Activated T-helper 2 cell treated with anti-CD3 and anti-CD28 coated beads, Interferon-gamma antibody, Interleukin-2, Interleukin-4, amounts not matched to agents 10 μg/mL and 5 μg/mL and 100 μg/mL, durations not matched to agents 14 hours and 24 hours and 36 hours (primary cell): ENCODE measurements at regions of chrX and their contacts with region 1.

Region 1: GRCh38 chrX:55907968-55908607 is 190.5 kb downstream of the RRAGB start:
- DNase-seq: peak; percentile 34
- H3K4me3 Mint-ChIP-seq: peak overlapping the region; percentile 89
- H3K27ac Mint-ChIP-seq: peak overlapping the region; percentile 77
- H3K4me1 Mint-ChIP-seq: peaks cover 13% of the 10 kb centered on the region
- H3K27me3 Mint-ChIP-seq: no peaks in the 10 kb centered on the region

Region 2: DNA sequence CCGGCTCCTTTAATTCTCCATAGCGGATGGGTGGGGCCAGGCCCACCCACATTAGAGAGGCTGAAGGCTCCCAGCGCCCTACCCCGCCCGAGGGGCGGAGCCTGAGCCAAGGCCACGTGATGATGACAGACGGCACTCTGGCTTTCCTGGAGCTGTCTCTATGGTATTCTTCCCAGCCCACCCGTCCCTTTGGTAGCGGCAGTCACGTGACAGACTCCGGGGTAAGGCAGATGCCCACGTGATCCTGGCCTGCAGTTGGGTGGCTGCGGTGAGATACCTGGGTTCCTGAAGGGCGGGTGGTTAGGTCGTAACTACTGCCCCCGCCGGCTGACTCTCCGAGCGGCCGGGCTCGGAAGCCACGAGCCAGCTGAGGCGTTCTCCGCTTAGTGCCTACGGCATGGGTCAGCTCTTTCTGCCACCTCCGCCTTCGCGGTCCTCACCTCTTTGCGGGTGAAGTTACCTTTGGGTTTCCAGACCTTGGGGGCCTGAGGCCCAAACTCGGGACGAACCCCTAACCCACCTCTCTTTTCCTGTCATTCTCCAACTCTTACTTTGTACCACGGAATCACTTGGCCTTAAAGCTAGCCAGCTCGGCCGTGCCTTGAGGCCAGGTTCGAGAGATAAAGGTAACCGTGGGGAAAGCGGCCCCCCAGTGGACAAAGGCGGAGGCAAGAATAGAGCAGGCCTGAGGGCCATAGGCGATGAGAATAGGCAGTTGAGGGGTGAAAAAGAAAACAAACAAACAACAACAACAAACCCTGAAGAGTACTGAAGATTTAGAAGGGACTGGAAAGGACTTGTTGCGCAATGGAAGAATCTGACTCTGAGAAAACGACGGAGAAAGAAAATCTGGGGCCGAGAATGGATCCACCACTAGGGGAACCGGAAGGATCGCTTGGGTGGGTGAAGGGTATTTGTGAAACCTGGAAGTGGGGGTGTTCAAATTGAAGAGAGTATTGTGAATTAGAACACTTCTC is 190.3 kb before region 1 on chrX and contains the start of gene RRAGB:
- intact Hi-C with region 1: loop called (anchors 2 kb)
- DNase-seq: peak; percentile 88
- H3K4me3 Mint-ChIP-seq: peak within 1 kb of the TSS; percentile 87
- H3K27ac Mint-ChIP-seq: peak within 1 kb of the TSS; percentile 83
- H3K4me1 Mint-ChIP-seq: peaks cover 17% of the 10 kb centered on the region
- H3K27me3 Mint-ChIP-seq: no peaks in the 10 kb centered on the region
- total RNA-seq, gene RRAGB: 5.2 and 6.4 TPM in 2 replicates

Region 3: DNA sequence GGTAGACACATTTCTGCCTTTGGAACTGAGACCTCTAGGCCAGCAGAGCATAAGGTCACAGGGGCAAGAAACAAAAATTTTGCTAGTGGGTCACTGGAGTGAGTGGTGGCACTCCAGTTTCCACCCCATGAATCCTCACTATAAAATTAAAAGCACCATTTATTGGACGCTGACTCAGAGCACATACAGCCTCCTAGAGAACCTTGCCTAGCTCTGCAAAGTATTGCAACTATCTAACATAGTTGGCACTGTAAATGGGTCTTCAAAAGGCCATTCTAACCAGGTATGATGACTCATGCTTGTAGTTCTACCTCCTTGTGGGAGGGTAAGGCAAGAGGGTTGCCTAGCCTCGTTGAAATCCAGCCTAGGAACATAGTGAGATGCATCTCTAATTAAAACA is 165.4 kb before region 1 on chrX:
- intact Hi-C with region 1: no loop called
- DNase-seq: no peak
- H3K4me3 Mint-ChIP-seq: no peak overlapping the region
- H3K27ac Mint-ChIP-seq: no peak overlapping the region
- H3K4me1 Mint-ChIP-seq: no peaks in the 10 kb centered on the region
- H3K27me3 Mint-ChIP-seq: no peaks in the 10 kb centered on the region

Region 4: DNA sequence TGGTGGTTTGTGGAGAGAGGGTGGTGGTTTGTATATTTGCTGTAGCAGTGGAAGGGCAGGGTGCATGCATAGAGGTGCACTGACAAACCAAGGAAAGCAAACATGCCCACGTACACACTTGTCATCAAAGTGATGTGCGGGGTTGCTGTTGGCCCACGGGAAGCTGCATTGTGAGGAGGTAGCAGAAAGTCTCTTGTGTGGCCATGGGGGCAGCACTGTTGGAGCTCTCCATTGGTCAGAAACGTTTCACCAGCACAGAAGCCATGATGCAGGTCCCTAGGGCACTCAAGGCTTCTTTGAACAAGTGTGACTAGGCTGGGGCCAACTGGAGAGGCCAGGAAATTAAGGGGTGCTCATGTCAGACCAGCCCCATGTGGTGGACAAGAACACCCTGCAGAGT is 149.2 kb after region 1 on chrX:
- intact Hi-C with region 1: no loop called
- DNase-seq: no peak
- H3K4me3 Mint-ChIP-seq: no peak overlapping the region
- H3K27ac Mint-ChIP-seq: no peak overlapping the region
- H3K4me1 Mint-ChIP-seq: no peaks in the 10 kb centered on the region
- H3K27me3 Mint-ChIP-seq: no peaks in the 10 kb centered on the region

Region 5: DNA sequence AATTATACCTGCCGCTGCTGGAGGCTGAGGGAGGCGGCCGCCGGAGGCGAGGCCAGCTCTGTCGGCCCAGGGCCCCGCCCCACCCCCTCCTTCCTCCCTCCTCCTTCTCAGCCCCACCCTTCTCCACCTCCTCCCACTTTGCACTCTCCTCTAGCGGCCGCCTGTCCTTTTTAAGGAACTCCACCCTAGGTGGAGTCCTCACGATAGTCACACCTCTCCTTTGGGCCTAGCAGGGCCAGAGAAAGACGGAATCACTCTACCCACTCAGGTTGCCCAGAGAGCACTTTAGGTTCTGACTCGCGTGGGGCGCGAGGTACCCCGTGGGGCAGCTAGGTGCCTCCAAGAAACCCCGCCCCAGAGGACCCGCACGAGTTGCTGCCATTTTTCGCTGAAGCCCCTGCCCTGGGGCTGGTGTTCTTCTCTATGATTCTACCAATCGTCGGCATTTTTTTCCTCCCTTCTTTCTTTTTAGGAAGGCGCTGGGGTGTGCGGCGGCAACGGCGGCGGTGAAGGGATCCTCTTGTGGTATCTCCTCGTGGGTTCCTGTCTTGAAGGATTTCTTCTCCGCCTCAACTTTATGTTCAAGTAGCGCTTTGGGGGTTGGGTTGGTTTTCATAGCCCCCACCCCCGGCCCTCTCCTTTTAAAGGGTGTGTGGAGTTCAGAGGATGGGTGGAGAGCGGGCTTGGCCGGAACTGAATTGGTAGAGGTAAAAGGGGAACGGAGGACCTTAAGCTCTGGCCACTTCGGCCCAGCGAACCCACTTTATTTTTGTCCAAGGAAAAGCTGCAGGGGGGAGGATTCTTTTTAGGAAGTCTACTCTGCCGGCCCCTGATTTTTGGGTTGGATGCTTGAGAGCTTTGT is 324.4 kb after region 1 on chrX and contains the start of gene KLF8:
- intact Hi-C with region 1: loop called (anchors 5 kb)
- DNase-seq: peak; percentile 24
- H3K4me3 Mint-ChIP-seq: peak within 1 kb of the TSS; percentile 86
- H3K27ac Mint-ChIP-seq: peak within 1 kb of the TSS; percentile 63
- H3K4me1 Mint-ChIP-seq: peaks cover 24% of the 10 kb centered on the region
- H3K27me3 Mint-ChIP-seq: peaks cover 6% of the 10 kb centered on the region
- total RNA-seq, gene KLF8: 7.4 and 7.5 TPM in 2 replicates

Region 6: DNA sequence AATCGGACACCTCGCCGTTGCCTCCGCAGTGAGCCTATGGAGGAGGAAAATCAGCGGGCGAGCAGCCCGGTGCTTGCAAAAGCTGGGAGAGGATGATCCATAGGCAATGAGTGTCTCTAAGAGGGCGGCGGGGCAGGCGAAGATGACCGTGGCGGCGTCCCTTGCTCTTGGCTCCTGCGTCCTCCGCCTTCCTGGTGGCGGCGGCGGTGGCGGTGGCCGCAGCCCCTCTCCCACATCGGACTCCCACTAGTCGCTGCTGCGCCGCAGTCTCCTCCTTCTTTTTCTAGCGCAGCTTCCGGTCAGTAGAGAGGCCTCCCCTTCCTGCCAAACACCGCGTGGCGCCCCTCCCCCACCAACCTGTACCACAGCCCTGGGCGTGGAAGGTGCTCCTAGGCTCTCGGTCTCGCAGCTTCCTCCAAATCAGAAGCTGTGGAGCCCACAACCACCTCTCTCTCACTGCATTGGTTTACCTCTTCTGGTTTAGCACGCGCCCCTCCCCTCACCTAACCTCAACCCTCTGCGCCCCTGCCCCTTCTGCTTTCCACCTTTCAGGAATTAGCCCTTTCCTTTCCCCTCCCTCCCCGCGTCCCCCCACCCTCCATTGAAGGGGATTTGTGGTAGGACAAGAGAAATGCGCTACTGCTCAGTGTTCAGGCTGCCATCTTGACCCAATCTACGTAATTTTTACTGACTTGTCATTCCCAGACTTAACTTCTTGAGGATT is 1087.3 kb after region 1 on chrX and contains the start of gene SPIN3:
- intact Hi-C with region 1: loop called (anchors 5 kb)
- DNase-seq: peak; percentile 40
- H3K4me3 Mint-ChIP-seq: peak within 1 kb of the TSS; percentile 88
- H3K27ac Mint-ChIP-seq: peak within 1 kb of the TSS; percentile 84
- H3K4me1 Mint-ChIP-seq: peaks cover 30% of the 10 kb centered on the region
- H3K27me3 Mint-ChIP-seq: no peaks in the 10 kb centered on the region
- total RNA-seq, gene SPIN3: 10.0 and 11.5 TPM in 2 replicates